Panc1 (cell line): ENCODE measurements at regions of chr17 and their contacts with region 1.

Region 1: DNA sequence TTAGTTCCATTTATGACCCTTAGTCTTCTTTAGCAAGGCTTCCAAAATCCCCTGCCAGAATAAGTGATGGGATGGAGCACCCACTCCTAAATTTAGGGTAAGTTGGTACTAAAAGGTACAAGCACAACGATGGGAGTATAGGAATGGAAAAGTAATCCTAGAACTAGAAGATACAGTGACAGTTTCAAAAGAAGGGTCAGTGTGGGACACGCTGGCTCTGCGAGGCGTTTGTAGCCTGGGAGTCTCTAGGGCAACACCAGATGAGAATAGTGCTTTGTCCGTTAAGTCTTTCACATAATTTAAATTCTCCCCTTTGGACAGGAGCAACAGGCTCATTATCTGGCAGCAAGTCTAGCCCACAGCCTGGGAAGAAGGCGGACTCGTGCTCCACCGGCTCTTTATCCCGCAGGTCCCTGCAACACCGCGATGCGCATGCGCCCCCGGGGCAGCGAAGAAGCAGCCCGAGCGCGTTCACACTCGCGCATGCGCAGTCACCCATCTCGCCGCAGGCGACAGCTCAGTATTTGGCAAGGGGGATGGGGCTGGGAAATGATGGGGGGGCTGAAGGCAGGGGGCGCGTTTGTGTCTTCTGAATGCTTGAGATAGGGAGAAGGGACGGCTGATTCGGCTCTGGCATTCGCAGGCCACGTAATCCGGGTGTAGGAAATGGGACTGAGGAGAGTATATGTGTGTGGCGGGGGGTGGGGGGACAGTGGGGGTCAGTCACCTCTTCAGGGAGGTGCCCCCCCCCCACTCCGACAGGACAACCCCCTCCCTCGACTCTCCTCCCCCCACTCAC is 564 bp downstream of the SPOP start:
- DNase-seq: peak; percentile 67
- ATAC-seq: peak; percentile 88
- H3K4me3 ChIP-seq: peak overlapping the region; percentile 68 to 73
- H3K27ac ChIP-seq: peak overlapping the region; percentile 99
- H3K4me1 ChIP-seq: peaks cover 9% of the 10 kb centered on the region
- H3K27me3 ChIP-seq: no peaks in the 10 kb centered on the region
- CTCF ChIP-seq: no peak

Region 2: DNA sequence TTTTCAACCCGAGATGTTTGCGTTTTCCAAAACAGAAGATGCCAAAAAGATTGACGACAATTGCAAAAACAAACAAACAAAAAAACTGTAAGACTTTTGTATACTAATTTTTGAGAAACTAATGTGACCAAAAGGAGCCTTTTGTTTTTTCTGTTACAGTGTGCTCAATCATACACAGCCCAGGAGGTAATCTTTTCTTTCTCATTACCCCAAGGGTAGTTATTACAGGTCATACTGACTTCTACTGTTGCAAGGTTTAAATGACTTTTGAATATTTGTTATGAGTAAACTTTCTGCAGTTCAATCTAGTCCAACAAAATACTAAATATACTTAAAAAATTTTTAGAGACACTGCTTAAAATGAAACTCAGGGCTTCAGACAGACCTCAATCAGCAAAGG is 47.2 kb before region 1 on chr17:
- CTCF ChIA-PET with region 1: interaction called, 11 read pairs
- POLR2A ChIA-PET with region 1: no interaction called
- in situ Hi-C with region 1: loop called (anchors 5 kb)
- intact Hi-C with region 1: no loop called
- DNase-seq: no peak
- ATAC-seq: no peak
- H3K4me3 ChIP-seq: no peak overlapping the region
- H3K27ac ChIP-seq: no peak overlapping the region
- H3K4me1 ChIP-seq: no peaks in the 10 kb centered on the region
- H3K27me3 ChIP-seq: no peaks in the 10 kb centered on the region
- CTCF ChIP-seq: no peak

Region 3: DNA sequence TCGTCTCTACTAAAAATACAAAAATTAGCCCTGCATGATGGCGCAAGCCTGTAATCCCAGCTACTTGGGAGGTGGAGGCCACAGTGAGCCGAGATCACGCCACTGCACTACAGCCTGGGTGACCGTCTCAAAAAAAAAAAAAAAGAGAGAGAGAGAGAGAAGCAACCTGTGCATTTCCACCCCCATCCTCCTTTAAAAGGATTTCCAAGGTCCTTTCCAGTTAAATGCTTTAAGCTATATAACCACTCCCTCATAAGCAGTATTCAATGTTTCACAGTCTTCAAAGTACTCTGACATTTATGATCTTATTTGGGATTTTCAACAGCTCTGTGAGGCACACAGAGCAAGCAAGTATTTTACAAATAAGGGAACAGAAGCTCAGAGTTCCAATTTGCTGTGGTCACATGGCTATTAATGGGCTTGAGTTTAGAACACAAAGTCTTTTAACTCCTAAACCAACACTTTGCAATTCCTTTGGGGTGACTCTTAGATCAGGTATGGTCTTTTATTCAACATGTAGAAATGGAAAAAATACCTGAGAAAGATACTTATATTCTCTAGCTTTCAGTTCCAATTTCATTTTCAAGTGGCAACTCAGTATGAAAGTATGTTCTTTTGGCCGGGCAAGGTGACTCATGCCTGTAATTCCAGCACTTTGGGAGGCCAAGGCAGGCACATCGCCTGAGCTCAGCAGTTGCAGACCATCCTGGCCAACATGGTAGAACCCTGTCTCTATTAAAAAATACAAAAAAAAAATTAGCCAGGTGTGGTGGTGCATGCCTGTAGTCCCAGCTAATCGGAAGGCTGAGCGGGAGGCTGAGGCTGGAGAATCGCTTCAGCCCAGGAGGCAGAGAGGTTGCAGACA is 30.7 kb before region 1 on chr17:
- CTCF ChIA-PET with region 1: no interaction called
- POLR2A ChIA-PET with region 1: interaction called, 14 read pairs
- in situ Hi-C with region 1: no loop called
- intact Hi-C with region 1: no loop called
- DNase-seq: peak; percentile 69
- ATAC-seq: peak; percentile 97
- H3K4me3 ChIP-seq: peak overlapping the region; percentile 1 to 42; a peak in 3 of 4 replicates
- H3K27ac ChIP-seq: peak overlapping the region; percentile 82
- H3K4me1 ChIP-seq: peaks cover 26% of the 10 kb centered on the region
- H3K27me3 ChIP-seq: no peaks in the 10 kb centered on the region
- CTCF ChIP-seq: no peak